ENCODE measurements at regions of chr21 and their contacts with region 1.

Region 1: DNA sequence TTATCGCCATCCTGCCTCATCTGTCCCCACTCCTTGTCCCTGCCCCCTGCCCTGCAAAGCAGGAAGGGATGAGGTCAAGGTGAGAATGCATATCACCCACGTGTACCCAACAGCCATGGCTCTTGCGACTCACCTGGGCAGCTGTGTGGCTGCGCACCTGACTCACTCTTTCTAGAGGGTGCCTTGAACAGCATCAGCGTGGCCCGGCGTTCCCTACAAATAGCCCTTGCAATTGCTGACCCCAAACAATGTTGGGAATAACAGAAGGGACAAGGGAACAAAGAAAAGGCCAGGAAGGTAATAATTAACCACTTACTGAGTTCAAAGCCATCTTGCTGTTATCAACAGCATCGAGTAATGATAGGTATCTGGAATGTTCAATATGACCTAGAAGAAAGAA is 10.2 kb downstream of the TMPRSS2 start:
- DNase-seq: peak; percentile 43 to 58
- H3K4me3 ChIP-seq: no peak overlapping the region
- H3K4me3 Mint-ChIP-seq: peak overlapping the region; percentile 43
- H3K27ac Mint-ChIP-seq: peak overlapping the region; percentile 80
- H3K4me1 ChIP-seq: peaks cover 67% of the 10 kb centered on the region
- H3K4me1 Mint-ChIP-seq: peaks cover 64% of the 10 kb centered on the region
- H3K27me3 ChIP-seq: no peaks in the 10 kb centered on the region
- H3K27me3 Mint-ChIP-seq: no peaks in the 10 kb centered on the region
- CTCF ChIP-seq: no peak

Region 2: GRCh38 chr21:41322487-41323382 is 175.1 kb before region 1 on chr21:
- CTCF ChIA-PET with region 1: no interaction called
- POLR2A ChIA-PET with region 1: no interaction called
- intact Hi-C with region 1: loop called (anchors 2 kb)
- DNase-seq: peak; percentile 90 to 94
- H3K4me3 ChIP-seq: peak overlapping the region; percentile 43
- H3K4me3 Mint-ChIP-seq: peak overlapping the region; percentile 79
- H3K27ac Mint-ChIP-seq: peak overlapping the region; percentile 92
- H3K4me1 ChIP-seq: peaks cover 52% of the 10 kb centered on the region
- H3K4me1 Mint-ChIP-seq: peaks cover 28% of the 10 kb centered on the region
- H3K27me3 ChIP-seq: no peaks in the 10 kb centered on the region
- H3K27me3 Mint-ChIP-seq: no peaks in the 10 kb centered on the region
- CTCF ChIP-seq: no peak

Region 3: DNA sequence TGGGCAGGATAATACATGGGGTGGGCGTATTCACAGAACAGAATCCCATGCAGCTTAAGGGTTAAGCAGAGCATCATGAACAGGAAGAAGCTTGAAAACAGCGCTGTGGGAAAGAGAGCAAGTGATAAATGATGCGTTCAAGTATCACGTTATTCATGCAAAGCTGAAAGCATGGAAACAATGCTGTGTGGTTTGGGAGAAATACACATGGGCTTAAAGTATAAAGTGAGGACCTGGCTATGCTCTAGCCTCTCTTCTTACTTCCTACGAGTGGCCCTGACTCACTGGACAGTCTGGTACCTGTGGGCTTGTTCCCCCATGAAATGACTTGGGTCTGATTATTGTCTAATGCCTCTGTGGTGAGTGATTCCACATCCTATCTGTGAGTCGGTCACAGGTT is 15.5 kb before region 1 on chr21:
- CTCF ChIA-PET with region 1: no interaction called
- POLR2A ChIA-PET with region 1: no interaction called
- intact Hi-C with region 1: loop called (anchors 2 kb)
- DNase-seq: no peak
- H3K4me3 ChIP-seq: no peak overlapping the region
- H3K4me3 Mint-ChIP-seq: no peak overlapping the region
- H3K27ac Mint-ChIP-seq: no peak overlapping the region
- H3K4me1 ChIP-seq: peaks cover 32% of the 10 kb centered on the region
- H3K4me1 Mint-ChIP-seq: peaks cover 23% of the 10 kb centered on the region
- H3K27me3 ChIP-seq: no peaks in the 10 kb centered on the region
- H3K27me3 Mint-ChIP-seq: no peaks in the 10 kb centered on the region
- CTCF ChIP-seq: no peak

Measured in Caco-2 (cell line).